ENCODE measurements at regions of chr19 and their contacts with region 1.

Region 1: GRCh38 chr19:8641908-8642547 is 11.6 kb downstream of the NFILZ start:
- DNase-seq: peak in 1 of 2 experiments; percentile 6
- H3K4me3 ChIP-seq: no peak overlapping the region
- H3K27ac ChIP-seq: no peak overlapping the region
- H3K4me1 ChIP-seq: no peaks in the 10 kb centered on the region
- H3K27me3 ChIP-seq: peaks cover 8% of the 10 kb centered on the region
- CTCF ChIP-seq: peak; percentile 76

Region 2: DNA sequence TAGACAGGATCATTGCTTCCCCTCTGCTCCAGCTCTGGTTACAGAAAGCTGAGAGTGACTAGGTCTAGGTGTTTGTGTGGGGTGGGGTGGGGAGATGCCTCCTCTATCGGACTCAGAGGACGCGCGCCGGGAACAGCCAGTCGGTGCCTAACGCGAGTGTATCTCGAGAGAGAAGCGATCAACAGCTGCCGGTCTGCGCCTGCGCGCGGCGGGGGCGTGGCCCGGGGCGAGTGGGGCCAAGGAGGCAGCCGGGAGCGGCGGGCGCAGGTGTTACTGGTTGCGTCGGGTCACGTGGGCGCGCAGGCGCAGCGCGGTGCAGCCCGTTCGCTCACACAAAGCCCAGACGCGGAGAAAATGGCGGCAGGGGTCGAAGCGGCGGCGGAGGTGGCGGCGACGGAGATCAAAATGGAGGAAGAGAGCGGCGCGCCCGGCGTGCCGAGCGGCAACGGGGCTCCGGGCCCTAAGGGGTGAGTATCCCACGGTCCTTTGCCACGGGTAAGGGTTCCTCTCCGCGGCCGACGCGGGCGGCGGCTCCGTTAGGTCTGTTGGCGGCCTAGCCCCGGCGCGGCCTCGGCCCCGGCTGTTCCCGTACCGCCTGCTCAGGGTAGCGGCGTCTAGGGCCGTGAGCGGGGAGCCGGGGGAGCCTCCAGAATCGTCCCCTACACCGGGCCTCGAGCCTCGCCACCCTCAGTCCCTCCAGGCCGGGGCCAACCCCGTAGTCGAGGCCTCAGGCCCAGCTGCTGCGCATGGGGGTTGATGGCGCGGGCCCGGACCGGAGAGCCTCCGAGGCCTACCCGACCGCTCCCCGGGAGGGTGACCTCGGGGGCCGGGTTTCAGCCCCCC is 197.2 kb before region 1 on chr19 and contains the start of gene HNRNPM:
- CTCF ChIA-PET with region 1: no interaction called
- POLR2A ChIA-PET with region 1: no interaction called
- intact Hi-C with region 1: no loop called
- DNase-seq: peak; percentile 95 to 100
- H3K4me3 ChIP-seq: peak within 1 kb of the TSS; percentile 98
- H3K27ac ChIP-seq: peak within 1 kb of the TSS; percentile 76
- H3K4me1 ChIP-seq: peaks cover 38% of the 10 kb centered on the region
- H3K27me3 ChIP-seq: no peaks in the 10 kb centered on the region
- CTCF ChIP-seq: no peak
- total RNA-seq, gene HNRNPM: 220 and 239 TPM in 2 replicates

Region 3: GRCh38 chr19:8615813-8616596 is 26.0 kb before region 1 on chr19:
- CTCF ChIA-PET with region 1: interaction called, 6 read pairs
- POLR2A ChIA-PET with region 1: no interaction called
- intact Hi-C with region 1: loop called (anchors 1 kb)
- DNase-seq: peak in 1 of 2 experiments; percentile 48
- H3K4me3 ChIP-seq: no peak overlapping the region
- H3K27ac ChIP-seq: no peak overlapping the region
- H3K4me1 ChIP-seq: no peaks in the 10 kb centered on the region
- H3K27me3 ChIP-seq: peaks cover 16% of the 10 kb centered on the region; the same call in 1 of the 2 replicates
- CTCF ChIP-seq: peak; percentile 98